ENCODE measurements at regions of chr11 and their contacts with region 1.

Region 1: GRCh38 chr11:108237058-108237481 is 14.2 kb downstream of the ATM start:
- DNase-seq: peak; percentile 68
- H3K4me3 Mint-ChIP-seq: peak overlapping the region; percentile 63
- H3K27ac Mint-ChIP-seq: peak overlapping the region; percentile 87
- H3K4me1 Mint-ChIP-seq: peaks cover 51% of the 10 kb centered on the region
- H3K27me3 Mint-ChIP-seq: no peaks in the 10 kb centered on the region

Region 2: DNA sequence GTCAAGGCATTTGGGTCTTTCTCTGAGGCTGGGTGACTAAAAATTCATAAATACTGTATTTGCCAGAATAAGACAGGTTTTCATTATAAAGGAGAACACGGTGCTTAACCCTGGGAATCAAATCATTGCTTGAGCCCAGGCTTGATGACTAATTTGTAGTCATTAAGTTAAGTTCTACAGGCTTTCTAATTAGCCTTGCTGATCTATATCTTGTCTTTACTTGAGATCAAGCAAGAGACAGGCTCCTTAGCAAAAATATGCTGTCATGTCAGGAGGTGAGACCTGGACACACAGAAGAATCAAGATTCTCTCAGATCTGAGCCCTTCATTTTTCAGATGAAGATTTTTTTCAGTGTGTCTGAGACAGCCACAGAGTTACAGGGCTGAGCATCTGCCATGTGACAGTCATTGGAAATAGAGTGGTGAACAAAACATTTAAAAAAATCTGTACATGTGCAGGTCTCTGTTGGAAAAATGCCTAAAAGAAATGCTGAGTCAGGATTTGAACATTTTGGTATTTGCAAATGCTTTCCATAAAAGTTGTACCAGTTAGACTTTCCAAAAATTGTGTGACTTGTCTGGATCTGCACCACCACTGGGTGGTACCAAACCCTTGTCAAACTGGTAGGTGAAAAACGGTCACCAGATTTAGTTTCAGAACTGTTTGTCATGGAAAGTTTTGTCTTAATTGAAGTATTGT is 101.1 kb before region 1 on chr11:
- intact Hi-C with region 1: loop called (anchors 5 kb)
- DNase-seq: peak; percentile 71
- H3K4me3 Mint-ChIP-seq: no peak overlapping the region
- H3K27ac Mint-ChIP-seq: peak overlapping the region; percentile 77
- H3K4me1 Mint-ChIP-seq: peaks cover 9% of the 10 kb centered on the region
- H3K27me3 Mint-ChIP-seq: no peaks in the 10 kb centered on the region

Region 3: GRCh38 chr11:108199446-108200321 is 37.4 kb before region 1 on chr11:
- intact Hi-C with region 1: loop called (anchors 1 kb)
- DNase-seq: peak; percentile 77
- H3K4me3 Mint-ChIP-seq: peak overlapping the region; percentile 16
- H3K27ac Mint-ChIP-seq: peak overlapping the region; percentile 79
- H3K4me1 Mint-ChIP-seq: peaks cover 35% of the 10 kb centered on the region
- H3K27me3 Mint-ChIP-seq: no peaks in the 10 kb centered on the region

Region 4: DNA sequence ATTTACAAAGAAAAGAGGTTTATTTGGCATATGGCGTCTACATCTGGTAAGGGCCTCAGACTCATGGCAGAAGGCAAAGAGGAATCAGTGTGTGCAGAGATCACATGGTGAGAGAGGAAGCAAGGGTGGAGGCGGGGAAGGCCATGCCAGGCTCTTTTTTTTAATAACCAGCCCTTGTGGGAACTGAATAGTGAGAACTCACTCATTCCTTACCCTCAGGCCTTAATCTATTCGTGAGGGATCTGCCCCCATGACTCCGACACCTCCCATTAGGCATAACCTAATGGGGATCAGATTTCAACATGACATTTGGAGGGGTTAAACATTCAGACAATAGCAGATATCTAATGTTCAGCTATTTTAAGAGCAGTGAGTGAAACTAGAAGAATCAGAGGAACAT is 41.5 kb after region 1 on chr11:
- intact Hi-C with region 1: loop called (anchors 5 kb)
- DNase-seq: no peak
- H3K4me3 Mint-ChIP-seq: no peak overlapping the region
- H3K27ac Mint-ChIP-seq: peak overlapping the region; percentile 43
- H3K4me1 Mint-ChIP-seq: peaks cover 19% of the 10 kb centered on the region
- H3K27me3 Mint-ChIP-seq: no peaks in the 10 kb centered on the region

Region 5: DNA sequence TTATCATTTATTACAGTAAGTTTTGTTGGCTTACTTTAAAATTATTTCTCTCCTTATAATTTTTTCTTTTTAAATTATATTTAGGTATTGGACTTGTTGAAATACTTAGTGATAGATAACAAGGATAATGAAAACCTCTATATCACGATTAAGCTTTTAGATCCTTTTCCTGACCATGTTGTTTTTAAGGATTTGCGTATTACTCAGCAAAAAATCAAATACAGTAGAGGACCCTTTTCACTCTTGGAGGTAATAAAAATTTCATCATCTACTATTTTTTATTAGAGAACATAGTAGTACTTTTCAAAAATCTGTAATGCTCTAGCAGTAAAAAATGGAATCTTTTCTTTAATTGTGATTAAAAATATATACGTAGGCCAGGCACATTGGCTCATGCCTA is 56.2 kb after region 1 on chr11:
- intact Hi-C with region 1: no loop called
- DNase-seq: no peak
- H3K4me3 Mint-ChIP-seq: no peak overlapping the region
- H3K27ac Mint-ChIP-seq: no peak overlapping the region
- H3K4me1 Mint-ChIP-seq: no peaks in the 10 kb centered on the region
- H3K27me3 Mint-ChIP-seq: no peaks in the 10 kb centered on the region

Region 6: GRCh38 chr11:108497317-108498045 is 260.4 kb after region 1 on chr11:
- intact Hi-C with region 1: loop called (anchors 5 kb)
- DNase-seq: peak; percentile 91
- H3K4me3 Mint-ChIP-seq: peak overlapping the region; percentile 89
- H3K27ac Mint-ChIP-seq: peak overlapping the region; percentile 97
- H3K4me1 Mint-ChIP-seq: peaks cover 22% of the 10 kb centered on the region
- H3K27me3 Mint-ChIP-seq: no peaks in the 10 kb centered on the region

Measured in activated CD4-positive, alpha-beta T cell treated with anti-CD3 and anti-CD28 coated beads, Interleukin-2, amount 10 ng/mL, durations not matched to agents 24 days and 14 days (primary cell).